Activated CD8-positive, alpha-beta T cell treated with anti-CD3 and anti-CD28 coated beads, Interleukin-2, amount 10 ng/mL, durations not matched to agents 7 days and 5 days (primary cell): ENCODE measurements at regions of chr12 and their contacts with region 1.

Region 1: GRCh38 chr12:68223083-68223747 is 2.4 kb downstream of the IL26 start:
- DNase-seq: peak; percentile 83
- ATAC-seq: peak; percentile 98
- H3K4me3 Mint-ChIP-seq: no peak overlapping the region
- H3K27ac Mint-ChIP-seq: no peak overlapping the region
- H3K4me1 Mint-ChIP-seq: peaks cover 18% of the 10 kb centered on the region
- H3K27me3 Mint-ChIP-seq: peaks cover 13% of the 10 kb centered on the region

Region 2: GRCh38 chr12:68001486-68002466 is 221.4 kb before region 1 on chr12:
- CTCF ChIA-PET with region 1: interaction called, 11 read pairs
- POLR2A ChIA-PET with region 1: no interaction called
- DNase-seq: no peak
- ATAC-seq: no peak
- H3K4me3 Mint-ChIP-seq: no peak overlapping the region
- H3K27ac Mint-ChIP-seq: no peak overlapping the region
- H3K4me1 Mint-ChIP-seq: peaks cover 11% of the 10 kb centered on the region
- H3K27me3 Mint-ChIP-seq: no peaks in the 10 kb centered on the region

Region 3: DNA sequence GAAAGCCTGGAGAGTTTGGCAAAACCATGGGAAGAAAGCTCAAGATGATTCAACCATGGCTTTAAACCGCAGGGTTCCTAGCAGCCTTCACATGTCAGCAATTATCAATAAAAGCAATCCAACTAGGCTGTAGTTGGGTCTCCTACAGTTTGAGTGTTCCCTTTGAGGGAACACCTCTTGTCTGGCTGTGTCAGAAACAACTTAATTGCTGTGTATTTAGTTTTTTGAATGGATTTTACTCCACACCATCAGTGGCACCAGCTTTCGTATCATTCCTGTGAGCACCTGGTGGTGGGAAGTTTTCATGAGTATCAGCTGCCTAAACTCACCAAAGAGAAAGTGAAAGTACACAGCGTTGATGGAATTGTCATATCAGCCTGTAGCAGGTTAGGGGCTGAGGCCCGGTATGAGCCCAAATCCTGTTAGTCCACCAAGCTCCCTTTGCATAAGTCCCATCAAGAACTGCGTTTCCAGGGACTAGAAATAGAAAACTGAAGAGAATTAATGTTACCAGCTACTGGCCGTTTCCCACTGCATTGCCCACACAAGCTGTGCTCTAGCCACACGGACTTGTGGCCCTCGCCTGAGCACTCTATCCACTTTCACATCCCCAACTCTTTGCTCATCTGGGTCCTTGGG is 13.3 kb after region 1 on chr12:
- CTCF ChIA-PET with region 1: interaction called, 25 read pairs
- POLR2A ChIA-PET with region 1: interaction called, 4 read pairs
- DNase-seq: peak; percentile 57
- ATAC-seq: peak; percentile 78
- H3K4me3 Mint-ChIP-seq: peak overlapping the region; percentile 79
- H3K27ac Mint-ChIP-seq: peak overlapping the region; percentile 91
- H3K4me1 Mint-ChIP-seq: peaks cover 56% of the 10 kb centered on the region
- H3K27me3 Mint-ChIP-seq: no peaks in the 10 kb centered on the region

Region 4: DNA sequence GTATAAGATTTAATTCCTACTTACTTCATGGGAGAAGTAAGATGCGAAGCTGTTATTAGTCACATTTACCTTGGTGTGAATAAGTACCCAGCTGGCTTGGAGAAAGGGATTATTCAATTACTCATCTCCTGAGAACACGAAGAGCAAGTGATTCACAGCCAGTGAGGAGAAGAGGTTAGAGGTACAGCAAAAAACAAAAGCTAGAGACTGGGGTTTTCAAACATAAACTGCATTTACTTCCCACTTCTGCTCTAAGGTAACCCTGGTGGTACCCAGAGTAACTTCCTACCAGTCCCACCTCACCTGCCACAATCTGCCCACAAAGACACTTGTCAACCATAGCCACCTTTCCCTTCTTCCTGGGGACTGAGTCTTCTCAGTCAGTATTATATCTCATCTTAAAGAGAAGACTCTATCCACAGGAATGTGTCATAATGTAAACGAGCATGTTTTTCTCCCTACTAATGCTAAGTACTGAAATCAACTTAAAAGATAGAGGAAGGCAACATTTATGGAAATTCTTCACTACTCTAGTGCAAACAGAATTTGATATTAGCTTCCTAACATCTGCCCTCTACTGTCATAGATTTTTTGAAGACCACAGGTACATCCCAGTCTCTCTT is 36.2 kb after region 1 on chr12:
- CTCF ChIA-PET with region 1: interaction called, 18 read pairs
- POLR2A ChIA-PET with region 1: interaction called, 3 read pairs
- DNase-seq: peak; percentile 63
- ATAC-seq: peak; percentile 83
- H3K4me3 Mint-ChIP-seq: no peak overlapping the region
- H3K27ac Mint-ChIP-seq: no peak overlapping the region
- H3K4me1 Mint-ChIP-seq: peaks cover 33% of the 10 kb centered on the region
- H3K27me3 Mint-ChIP-seq: peaks cover 25% of the 10 kb centered on the region

Region 5: GRCh38 chr12:68279227-68280054 is 56.2 kb after region 1 on chr12:
- CTCF ChIA-PET with region 1: interaction called, 11 read pairs
- POLR2A ChIA-PET with region 1: no interaction called
- DNase-seq: no peak
- ATAC-seq: no peak
- H3K4me3 Mint-ChIP-seq: no peak overlapping the region
- H3K27ac Mint-ChIP-seq: no peak overlapping the region
- H3K4me1 Mint-ChIP-seq: peaks cover 30% of the 10 kb centered on the region
- H3K27me3 Mint-ChIP-seq: no peaks in the 10 kb centered on the region

Region 6: DNA sequence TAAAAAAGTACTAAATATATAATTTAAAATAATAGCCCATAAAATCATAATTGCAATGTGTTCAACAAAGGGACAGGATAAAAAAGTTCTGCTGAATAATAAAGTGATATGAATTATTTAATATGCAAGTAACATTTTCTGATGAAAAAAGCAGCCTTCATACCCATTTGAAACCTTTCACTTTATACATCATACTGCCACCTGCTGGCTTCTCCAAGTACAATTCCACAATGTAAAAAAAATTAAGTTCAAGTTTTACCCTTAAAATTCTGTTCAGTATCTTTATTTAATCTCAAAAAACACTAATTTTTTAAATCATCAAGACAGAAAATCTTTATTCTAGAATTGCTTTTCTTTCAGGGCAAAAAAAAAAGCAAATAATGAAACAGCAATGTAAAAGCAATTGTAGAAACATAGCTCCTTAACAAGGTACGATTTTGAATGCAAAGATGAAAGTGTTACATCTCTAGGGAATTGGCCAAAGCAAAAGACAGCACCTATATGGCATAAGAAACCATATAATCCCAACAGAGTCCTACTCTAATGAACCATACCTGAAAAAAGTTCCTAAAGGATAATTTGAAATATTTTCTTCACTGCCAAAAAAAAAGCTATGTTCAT is 93.9 kb after region 1 on chr12:
- CTCF ChIA-PET with region 1: interaction called, 84 read pairs
- POLR2A ChIA-PET with region 1: no interaction called
- DNase-seq: peak; percentile 72
- ATAC-seq: no peak
- H3K4me3 Mint-ChIP-seq: no peak overlapping the region
- H3K27ac Mint-ChIP-seq: no peak overlapping the region
- H3K4me1 Mint-ChIP-seq: no peaks in the 10 kb centered on the region
- H3K27me3 Mint-ChIP-seq: no peaks in the 10 kb centered on the region

Region 7: DNA sequence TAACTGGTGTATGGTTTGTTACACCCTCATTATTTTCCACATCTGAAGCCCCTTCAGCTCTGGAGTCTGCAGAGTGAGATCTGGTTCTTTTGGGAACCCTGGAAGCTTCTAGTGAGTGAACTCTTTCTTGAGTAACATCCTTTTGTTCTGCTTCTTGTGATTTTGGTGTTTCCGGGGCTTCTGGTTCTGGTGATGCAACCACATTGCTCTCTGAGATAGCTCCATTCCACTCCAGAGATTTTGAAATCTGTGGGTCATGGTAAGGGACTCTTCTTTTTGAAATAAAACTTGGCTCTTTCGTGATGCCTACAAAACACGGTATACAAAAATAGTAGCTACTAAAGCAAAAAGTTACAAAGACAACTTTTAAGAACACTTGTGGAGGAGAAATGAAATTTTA is 103.5 kb after region 1 on chr12:
- CTCF ChIA-PET with region 1: interaction called, 44 read pairs
- POLR2A ChIA-PET with region 1: no interaction called
- DNase-seq: no peak
- ATAC-seq: no peak
- H3K4me3 Mint-ChIP-seq: no peak overlapping the region
- H3K27ac Mint-ChIP-seq: no peak overlapping the region
- H3K4me1 Mint-ChIP-seq: peaks cover 21% of the 10 kb centered on the region
- H3K27me3 Mint-ChIP-seq: no peaks in the 10 kb centered on the region